BJ (cell line): ENCODE measurements at regions of chr10 and their contacts with region 1.

Region 1: DNA sequence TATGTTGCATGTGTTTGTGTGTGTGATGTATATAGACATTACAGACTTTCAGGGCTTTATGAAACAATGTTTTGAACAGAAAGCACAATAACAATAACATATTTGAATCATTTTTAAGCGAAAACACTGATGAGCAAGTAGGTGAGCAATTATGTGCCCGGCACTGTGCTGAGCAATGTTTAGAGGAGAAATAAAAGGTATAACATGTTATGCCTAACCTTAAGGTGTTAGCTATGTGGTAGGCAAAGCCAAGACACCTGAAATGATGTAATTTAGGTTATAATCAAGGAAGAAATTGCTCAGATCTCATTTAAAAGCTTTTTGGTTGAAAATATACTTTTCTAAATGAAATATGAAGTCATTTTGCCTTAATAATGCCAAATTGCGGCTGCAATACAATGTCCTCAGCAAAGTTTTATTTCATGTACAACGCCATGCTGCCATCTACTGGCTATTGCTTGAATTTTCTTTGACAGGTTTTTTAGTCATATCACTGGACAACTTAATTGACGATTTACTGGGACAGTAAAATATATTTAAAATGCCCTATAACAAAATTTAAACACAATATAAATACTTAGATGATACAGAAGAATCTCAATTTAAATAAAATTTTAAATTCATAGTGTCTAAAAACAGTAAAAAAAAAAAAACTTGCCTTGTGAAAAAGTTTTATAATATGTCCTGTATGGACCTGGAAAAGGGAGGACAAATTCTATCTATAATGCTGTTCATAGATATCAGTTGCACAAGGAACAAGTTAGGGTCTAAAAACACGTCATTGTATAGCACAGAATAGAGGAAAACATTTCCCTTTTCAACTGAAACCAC is 131.1 kb upstream of the CDK1 start:
- DNase-seq: no peak
- H3K4me3 ChIP-seq: no peak overlapping the region
- H3K27me3 ChIP-seq: no peaks in the 10 kb centered on the region
- CTCF ChIP-seq: peak; percentile 70

Region 2: GRCh38 chr10:60444494-60445064 is 202.6 kb before region 1 on chr10:
- CTCF ChIA-PET with region 1: interaction called, 74 read pairs
- POLR2A ChIA-PET with region 1: no interaction called
- DNase-seq: no peak
- H3K4me3 ChIP-seq: no peak overlapping the region
- H3K27me3 ChIP-seq: no peaks in the 10 kb centered on the region
- CTCF ChIP-seq: peak; percentile 57

Region 3: GRCh38 chr10:60629332-60629731 is 17.8 kb before region 1 on chr10:
- CTCF ChIA-PET with region 1: interaction called, 11 read pairs
- POLR2A ChIA-PET with region 1: no interaction called
- DNase-seq: no peak
- H3K4me3 ChIP-seq: no peak overlapping the region
- H3K27me3 ChIP-seq: 0 out of 2 replicates have a peak, but pooled peaks cover 2% of the 10 kb centered on the region
- CTCF ChIP-seq: no peak

Region 4: GRCh38 chr10:60662917-60663614 is 15.9 kb after region 1 on chr10:
- CTCF ChIA-PET with region 1: interaction called, 13 read pairs
- POLR2A ChIA-PET with region 1: no interaction called
- DNase-seq: no peak
- H3K4me3 ChIP-seq: no peak overlapping the region
- H3K27me3 ChIP-seq: no peaks in the 10 kb centered on the region
- CTCF ChIP-seq: no peak

Region 5: DNA sequence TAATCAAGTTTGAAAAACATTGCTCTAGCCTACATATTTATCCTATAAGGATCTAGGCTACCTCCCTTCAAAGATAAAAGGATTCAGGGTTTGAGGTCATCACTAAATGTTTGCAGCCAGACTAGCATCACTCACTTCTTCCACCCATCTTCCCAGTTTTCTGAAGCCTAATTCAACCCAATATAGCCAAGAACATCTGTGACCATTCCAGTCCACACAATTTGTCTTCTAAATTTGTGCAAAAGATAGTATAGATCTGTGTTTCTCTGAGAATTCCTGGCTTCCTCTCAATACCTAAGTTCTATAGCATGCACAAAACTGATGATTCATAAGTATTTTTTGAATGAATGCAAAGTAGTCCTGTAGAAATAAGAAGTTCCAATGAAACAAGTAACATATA is 28.1 kb after region 1 on chr10:
- CTCF ChIA-PET with region 1: no interaction called
- POLR2A ChIA-PET with region 1: no interaction called
- DNase-seq: no peak
- H3K4me3 ChIP-seq: no peak overlapping the region
- H3K27me3 ChIP-seq: no peaks in the 10 kb centered on the region
- CTCF ChIP-seq: no peak

Region 6: DNA sequence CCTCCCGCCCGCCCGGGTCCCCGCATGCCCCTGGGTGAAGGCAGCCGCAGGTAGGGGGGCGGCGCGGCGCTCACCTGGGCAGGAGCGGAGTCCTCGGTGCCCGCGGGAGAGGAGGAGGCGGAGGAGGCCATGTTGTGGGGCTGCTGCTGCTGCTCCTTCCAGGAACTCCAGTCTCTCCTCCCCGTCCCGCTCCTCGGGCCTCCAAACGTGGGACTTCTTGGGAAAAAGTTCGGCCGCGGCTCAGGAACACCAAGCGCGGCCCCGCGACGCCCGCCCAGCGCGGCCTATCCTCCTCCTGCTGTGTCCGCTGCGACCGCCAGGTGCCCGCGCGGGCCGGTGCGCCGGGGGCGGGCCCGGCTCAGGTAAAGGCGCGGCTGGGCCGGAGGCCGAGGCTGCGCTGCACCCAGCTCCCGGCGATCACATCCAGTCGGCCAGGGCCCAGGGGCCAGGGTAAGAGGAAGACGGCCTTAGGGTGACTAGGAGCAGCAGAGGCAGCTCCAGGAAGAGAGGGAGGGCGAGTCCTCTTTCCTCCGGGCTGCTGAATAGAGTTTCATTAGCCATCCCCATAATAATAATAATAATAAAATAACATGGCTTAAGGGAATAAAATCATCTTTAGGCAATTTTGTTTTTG is 86.1 kb after region 1 on chr10:
- CTCF ChIA-PET with region 1: no interaction called
- POLR2A ChIA-PET with region 1: no interaction called
- DNase-seq: no peak
- H3K4me3 ChIP-seq: peak overlapping the region; percentile 38
- H3K27me3 ChIP-seq: peaks cover 37% of the 10 kb centered on the region
- CTCF ChIP-seq: no peak

Region 7: DNA sequence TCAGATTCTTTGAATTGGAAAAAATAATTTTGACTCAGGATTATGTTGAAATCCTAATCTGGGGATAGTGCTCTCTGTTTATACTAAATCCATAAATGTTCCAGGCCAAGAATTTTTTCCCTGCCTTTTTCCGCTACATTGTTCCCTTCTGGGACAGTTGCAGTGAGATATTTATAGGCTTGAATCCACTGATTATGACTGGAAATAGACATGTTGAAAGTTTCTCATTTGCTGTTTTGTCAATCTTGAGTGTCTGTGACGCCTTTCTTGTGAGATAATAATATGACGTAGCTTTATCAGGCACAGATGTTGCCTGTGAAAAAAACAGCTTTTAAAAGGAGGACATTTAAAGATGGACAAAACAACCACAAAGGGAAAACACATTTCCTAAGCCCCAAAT is 1410.2 kb after region 1 on chr10:
- CTCF ChIA-PET with region 1: no interaction called
- POLR2A ChIA-PET with region 1: interaction called, 11 read pairs
- DNase-seq: no peak
- H3K4me3 ChIP-seq: peak overlapping the region; percentile 6; the same call in 1 of the 2 replicates
- H3K27me3 ChIP-seq: no peaks in the 10 kb centered on the region
- CTCF ChIP-seq: no peak